WTC11 (cell line): ENCODE measurements at regions of chr2 and their contacts with region 1.

Region 1: GRCh38 chr2:71460595-71461303 is 7.4 kb downstream of the DYSF start:
- DNase-seq: no peak
- ATAC-seq: peak; percentile 33
- H3K4me3 Mint-ChIP-seq: no peak overlapping the region
- H3K27ac Mint-ChIP-seq: no peak overlapping the region
- H3K4me1 Mint-ChIP-seq: peaks cover 40% of the 10 kb centered on the region
- H3K27me3 Mint-ChIP-seq: peaks cover 32% of the 10 kb centered on the region
- CTCF ChIP-seq: peak; percentile 70

Region 2: GRCh38 chr2:71477231-71477691 is 16.5 kb after region 1 on chr2:
- CTCF ChIA-PET with region 1: interaction called, 32 read pairs
- POLR2A ChIA-PET with region 1: no interaction called
- DNase-seq: no peak
- ATAC-seq: no peak
- H3K4me3 Mint-ChIP-seq: no peak overlapping the region
- H3K27ac Mint-ChIP-seq: no peak overlapping the region
- H3K4me1 Mint-ChIP-seq: peaks cover 23% of the 10 kb centered on the region
- H3K27me3 Mint-ChIP-seq: peaks cover 2% of the 10 kb centered on the region; the same call in 1 of the 2 replicates
- CTCF ChIP-seq: no peak

Region 3: DNA sequence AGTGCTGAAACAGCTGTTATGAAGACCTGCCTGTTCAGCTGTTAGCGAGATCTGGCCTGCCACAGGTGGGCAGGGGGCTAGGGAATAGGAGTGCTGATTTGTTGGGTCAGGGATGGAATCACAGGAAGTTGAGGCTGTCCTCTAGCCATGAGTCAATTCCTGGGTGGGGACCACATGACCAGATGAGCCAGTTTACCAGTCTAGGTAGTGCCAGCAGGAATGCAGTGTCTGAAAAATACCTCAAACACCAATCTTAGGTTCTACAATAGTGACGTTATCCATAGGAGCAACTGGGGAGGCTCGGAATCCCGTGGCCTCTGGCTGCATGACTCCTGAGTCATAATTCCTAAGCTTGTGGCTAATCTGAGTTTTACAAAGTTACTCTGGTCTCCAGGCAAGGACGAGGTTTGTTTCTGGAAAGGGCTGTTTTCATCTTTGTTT is 37.5 kb after region 1 on chr2:
- CTCF ChIA-PET with region 1: interaction called, 25 read pairs
- POLR2A ChIA-PET with region 1: no interaction called
- DNase-seq: no peak
- ATAC-seq: no peak
- H3K4me3 Mint-ChIP-seq: no peak overlapping the region
- H3K27ac Mint-ChIP-seq: no peak overlapping the region
- H3K4me1 Mint-ChIP-seq: peaks cover 42% of the 10 kb centered on the region
- H3K27me3 Mint-ChIP-seq: no peaks in the 10 kb centered on the region; the same call in 1 of the 2 replicates
- CTCF ChIP-seq: no peak

Region 4: DNA sequence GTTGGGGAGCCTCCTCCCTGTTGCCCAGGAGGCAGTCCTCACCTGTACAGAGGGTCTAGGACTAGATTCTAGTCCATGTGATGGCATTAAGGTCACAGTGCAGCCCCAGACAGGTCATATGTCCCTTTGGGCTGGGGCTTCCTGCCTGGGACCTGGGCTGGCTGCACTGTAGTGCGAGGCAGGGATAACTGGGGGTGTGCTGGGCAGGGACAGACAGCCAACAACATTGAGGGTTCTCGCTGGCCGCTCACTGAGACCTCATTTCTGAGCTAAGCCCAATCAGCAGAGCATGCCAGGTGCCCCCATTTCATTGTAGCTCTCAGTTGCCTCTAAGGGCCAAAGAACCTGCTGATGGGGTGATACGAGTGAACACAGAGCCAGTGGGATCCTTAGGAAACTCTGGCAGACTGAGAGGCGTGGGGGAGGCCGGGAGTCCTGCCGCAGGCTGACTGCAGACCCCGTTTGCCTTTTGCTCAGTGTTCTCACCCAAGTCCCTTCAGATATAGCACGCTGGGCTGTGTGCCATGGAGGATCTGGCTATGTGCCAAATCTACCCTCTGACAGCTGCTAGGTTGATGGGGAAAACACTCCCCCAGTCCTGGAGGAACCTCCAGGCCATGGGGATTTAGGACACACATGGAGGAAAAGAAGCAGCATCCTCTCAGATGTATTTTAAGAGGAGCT is 44.5 kb after region 1 on chr2:
- CTCF ChIA-PET with region 1: interaction called, 116 read pairs
- POLR2A ChIA-PET with region 1: no interaction called
- DNase-seq: no peak
- ATAC-seq: no peak
- H3K4me3 Mint-ChIP-seq: no peak overlapping the region
- H3K27ac Mint-ChIP-seq: peak overlapping the region; percentile 44; the same call in 1 of the 2 replicates
- H3K4me1 Mint-ChIP-seq: peaks cover 8% of the 10 kb centered on the region
- H3K27me3 Mint-ChIP-seq: no peaks in the 10 kb centered on the region
- CTCF ChIP-seq: no peak

Region 5: DNA sequence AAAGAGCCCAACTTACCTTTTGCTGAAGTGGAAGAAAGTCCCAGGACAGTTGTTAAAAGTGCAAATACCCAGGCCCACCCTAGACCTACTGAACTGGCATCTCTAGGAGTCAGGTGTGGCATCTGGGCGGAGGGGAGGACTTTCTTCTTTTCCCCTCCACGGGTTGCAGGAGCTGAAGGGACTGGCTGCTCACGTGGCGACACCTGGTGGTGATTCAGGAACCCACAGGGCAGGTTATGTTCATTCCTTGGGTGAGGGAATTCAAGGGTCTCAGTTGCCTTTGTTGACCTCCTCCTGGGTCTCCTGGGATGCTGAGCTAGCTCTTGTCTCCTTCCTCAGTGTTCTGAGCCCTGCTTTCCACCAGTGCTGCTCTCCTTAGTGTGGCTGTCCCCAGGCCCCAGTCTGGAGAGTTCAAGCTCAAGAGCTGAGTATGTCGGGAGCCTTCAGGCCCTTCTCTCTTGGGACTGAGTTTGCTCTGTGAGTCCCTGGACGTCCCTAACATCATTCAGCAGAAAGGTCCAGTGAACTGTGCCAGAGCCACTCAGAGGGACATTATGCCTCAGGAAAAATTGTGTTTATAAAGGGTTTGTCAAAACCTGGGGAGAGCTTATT is 49.6 kb after region 1 on chr2:
- CTCF ChIA-PET with region 1: interaction called, 116 read pairs
- POLR2A ChIA-PET with region 1: no interaction called
- DNase-seq: peak; percentile 89
- ATAC-seq: peak; percentile 85
- H3K4me3 Mint-ChIP-seq: no peak overlapping the region
- H3K27ac Mint-ChIP-seq: no peak overlapping the region
- H3K4me1 Mint-ChIP-seq: no peaks in the 10 kb centered on the region
- H3K27me3 Mint-ChIP-seq: no peaks in the 10 kb centered on the region
- CTCF ChIP-seq: peak; percentile 79

Region 6: DNA sequence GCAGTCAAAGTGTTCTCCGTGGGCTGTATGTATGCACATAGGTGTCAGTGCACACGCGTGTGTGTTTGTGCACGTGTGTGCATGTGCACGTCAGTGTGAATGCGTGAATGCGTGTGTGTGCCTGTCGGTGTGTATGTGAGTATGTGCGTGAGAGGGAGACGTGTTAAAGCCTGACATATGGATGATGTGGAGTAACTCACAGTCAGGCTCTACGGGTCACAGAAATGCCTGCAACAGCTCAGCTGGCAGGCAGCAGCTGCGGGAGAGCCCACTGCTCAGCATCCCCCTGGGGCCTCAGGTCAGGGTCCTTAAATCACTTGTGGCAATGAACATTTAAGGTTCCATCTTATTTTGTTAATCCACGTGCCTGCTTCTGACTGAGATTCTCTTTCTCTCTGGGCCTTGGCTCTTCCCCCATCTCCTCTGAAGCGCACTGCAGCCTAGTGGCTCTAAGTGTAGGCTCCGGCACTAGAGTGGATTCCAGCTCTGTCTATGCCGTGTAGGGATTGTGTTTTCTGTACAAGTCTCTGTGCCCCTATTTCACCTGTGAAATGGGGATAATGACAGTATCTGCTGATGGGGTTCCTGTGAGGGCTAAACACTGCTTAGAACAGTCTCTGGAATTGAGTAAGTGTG is 55.6 kb after region 1 on chr2:
- CTCF ChIA-PET with region 1: interaction called, 116 read pairs
- POLR2A ChIA-PET with region 1: no interaction called
- DNase-seq: no peak
- ATAC-seq: no peak
- H3K4me3 Mint-ChIP-seq: no peak overlapping the region
- H3K27ac Mint-ChIP-seq: no peak overlapping the region
- H3K4me1 Mint-ChIP-seq: no peaks in the 10 kb centered on the region
- H3K27me3 Mint-ChIP-seq: no peaks in the 10 kb centered on the region
- CTCF ChIP-seq: no peak

Region 7: DNA sequence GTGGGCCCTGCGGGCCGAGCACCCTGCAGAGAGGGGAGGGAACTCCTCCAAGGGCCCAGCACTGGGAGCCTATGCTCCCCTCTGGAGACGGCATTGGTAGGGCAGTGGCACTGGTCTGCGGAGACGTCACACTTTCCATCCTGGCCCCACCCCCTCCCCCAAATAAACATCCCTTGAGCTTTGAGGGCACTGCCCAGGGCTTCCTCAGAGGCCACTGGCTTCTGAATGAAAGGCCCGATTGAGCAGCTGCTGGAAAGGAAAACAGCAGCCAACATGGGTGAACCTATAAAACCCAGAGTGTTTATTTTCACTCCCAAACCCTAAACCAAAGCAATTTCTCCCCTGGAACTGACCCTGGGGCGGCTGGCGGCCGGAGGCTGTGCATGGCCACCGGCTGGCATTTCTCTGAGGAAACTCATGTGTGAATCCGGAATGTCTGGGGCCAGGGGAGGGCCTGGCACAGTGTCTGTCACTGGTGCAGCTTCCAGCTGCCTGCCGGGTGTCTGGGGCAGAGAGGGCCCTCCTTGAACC is 131.5 kb after region 1 on chr2:
- CTCF ChIA-PET with region 1: no interaction called
- POLR2A ChIA-PET with region 1: no interaction called
- DNase-seq: no peak
- ATAC-seq: peak; percentile 34; the same call in 1 of the 2 replicates
- H3K4me3 Mint-ChIP-seq: no peak overlapping the region
- H3K27ac Mint-ChIP-seq: no peak overlapping the region
- H3K4me1 Mint-ChIP-seq: peaks cover 27% of the 10 kb centered on the region
- H3K27me3 Mint-ChIP-seq: no peaks in the 10 kb centered on the region
- CTCF ChIP-seq: no peak